Ascending aorta (tissue), 2 donors: ENCODE measurements at regions of chr13 and their contacts with region 1.

Region 1: GRCh38 chr13:101514788-101515187 is 62.3 kb downstream of the ITGBL1 start:
- DNase-seq: no peak
- H3K4me3 ChIP-seq: no peak overlapping the region
- H3K27ac ChIP-seq: no peak overlapping the region
- H3K4me1 ChIP-seq: peaks cover 0 to 7% of the 10 kb centered on the region in 2 donors
- H3K27me3 ChIP-seq: no peaks in the 10 kb centered on the region
- CTCF ChIP-seq: peak; percentile 52 to 69 (median 67)

Region 2: GRCh38 chr13:101626925-101627555 is 112.3 kb after region 1 on chr13:
- intact Hi-C with region 1: loop called (anchors 5 kb)
- DNase-seq: no peak
- H3K4me3 ChIP-seq: peak overlapping the region; percentile 50 to 59
- H3K27ac ChIP-seq: peak overlapping the region; percentile 67 to 82
- H3K4me1 ChIP-seq: peaks cover 4 to 15% of the 10 kb centered on the region in 2 donors
- H3K27me3 ChIP-seq: no peaks in the 10 kb centered on the region
- CTCF ChIP-seq: no peak

Region 3: DNA sequence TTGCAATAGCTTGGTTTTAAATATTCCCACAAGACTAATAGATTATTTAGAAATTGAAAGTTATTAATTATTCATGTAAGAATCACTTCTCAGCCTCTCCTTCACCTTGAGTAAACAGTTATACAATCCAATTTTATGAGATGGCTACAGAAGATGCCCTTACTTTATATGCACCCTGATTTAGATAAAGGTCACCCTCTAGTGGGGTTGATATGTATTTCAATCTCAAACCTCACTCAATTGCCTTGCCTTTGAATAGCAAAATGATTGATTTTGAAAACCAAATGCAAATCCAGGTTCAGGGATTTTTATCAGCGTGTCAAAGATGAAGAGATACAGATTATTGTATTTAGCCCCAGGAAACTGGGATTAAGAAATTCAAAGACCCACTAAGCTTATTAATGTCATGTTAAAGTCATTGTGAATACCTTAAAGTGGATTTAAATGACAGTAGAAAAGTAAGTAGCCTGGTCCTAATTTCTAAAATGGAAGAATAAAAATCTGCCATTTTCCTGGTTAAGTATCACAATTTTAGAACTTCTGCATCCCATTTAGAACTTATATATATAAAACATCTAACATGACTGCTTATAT is 242.8 kb after region 1 on chr13:
- intact Hi-C with region 1: loop called (anchors 1 kb)
- DNase-seq: no peak
- H3K4me3 ChIP-seq: no peak overlapping the region
- H3K27ac ChIP-seq: no peak overlapping the region
- H3K4me1 ChIP-seq: no peaks in the 10 kb centered on the region
- H3K27me3 ChIP-seq: no peaks in the 10 kb centered on the region
- CTCF ChIP-seq: peak; percentile 46 to 67 (median 47)